ENCODE measurements at regions of chr7 and their contacts with region 1.

Region 1: DNA sequence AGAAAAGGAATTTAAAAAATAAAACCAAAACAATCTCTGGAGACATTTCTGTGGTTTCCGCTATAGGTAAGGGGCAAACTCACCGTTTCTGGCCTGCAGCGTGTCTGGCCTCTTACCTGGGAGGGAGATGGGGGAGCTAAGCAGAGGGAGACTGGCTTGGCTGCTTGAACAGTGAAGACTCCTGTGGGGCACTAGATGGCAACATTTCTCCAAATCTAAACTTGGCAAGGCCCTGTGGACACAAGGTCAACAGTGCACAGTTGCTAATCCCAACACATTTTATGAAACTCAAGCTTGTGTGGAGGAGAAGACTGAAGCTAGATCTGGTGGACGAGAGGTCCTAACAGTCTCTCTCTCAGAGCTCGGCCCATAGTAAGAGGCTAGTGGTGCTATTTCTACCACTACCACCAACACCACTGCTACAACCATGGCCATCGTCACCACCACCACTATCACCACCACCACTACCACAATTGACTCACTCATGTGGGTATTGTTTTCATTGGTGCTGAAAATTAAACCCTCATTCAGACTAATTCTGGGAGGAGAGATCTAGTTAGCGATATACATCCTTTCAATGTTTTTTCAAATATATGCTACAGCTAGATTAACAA is 28.4 kb upstream of the CDHR3 start:
- DNase-seq: peak; percentile 20
- H3K4me3 Mint-ChIP-seq: no peak overlapping the region
- H3K27ac Mint-ChIP-seq: no peak overlapping the region
- H3K4me1 Mint-ChIP-seq: peaks cover 8% of the 10 kb centered on the region
- H3K27me3 Mint-ChIP-seq: peaks cover 4% of the 10 kb centered on the region
- CTCF ChIP-seq: no peak

Region 2: DNA sequence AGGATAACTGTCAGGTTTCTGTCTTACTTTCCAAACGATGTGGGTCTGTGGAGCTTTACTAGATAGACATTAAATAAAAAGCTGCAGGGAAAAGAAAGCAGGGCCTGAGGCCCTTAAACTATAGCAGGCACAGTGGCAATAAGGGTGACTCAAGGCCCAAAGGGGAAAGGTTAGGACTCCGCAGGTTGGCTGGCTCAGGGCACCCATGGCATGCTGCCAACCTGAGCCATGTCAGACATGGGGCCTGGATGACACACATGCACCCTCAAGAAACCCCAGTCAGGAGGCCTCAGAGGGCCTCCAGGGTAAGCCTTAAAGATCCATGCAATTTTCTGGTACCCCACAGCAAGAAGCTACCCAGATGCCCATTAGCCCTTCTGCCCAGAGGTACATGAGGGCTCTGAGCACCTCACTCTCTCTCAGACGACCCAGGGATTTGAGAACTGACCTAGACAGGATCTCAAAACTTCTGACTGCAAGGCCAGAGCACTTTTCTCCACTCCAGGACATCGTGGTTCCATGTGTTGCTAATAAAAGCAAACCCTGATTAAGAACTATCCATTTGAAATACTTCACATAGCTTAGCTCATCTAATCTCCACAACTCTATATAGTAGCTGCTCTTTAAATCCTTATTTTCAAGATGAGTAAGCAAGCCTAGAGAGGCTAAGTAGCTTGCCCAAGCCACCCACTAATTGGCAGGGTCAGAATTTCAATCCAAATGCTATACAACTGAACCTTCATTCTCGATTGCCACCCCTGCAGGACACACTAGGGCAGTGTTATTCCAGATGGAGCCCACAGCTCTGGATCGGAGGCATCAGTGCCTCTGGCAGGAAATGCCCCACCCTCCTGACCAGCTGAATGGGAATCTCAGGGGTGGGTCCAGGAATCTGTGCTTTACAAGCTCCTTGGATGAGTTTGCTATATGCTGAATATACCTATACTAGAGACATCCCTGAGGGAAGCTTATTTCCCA is 220.9 kb before region 1 on chr7:
- CTCF ChIA-PET with region 1: no interaction called
- intact Hi-C with region 1: no loop called
- DNase-seq: no peak
- H3K4me3 Mint-ChIP-seq: no peak overlapping the region
- H3K27ac Mint-ChIP-seq: no peak overlapping the region
- H3K4me1 Mint-ChIP-seq: peaks cover 12% of the 10 kb centered on the region
- H3K27me3 Mint-ChIP-seq: no peaks in the 10 kb centered on the region
- CTCF ChIP-seq: no peak

Region 3: GRCh38 chr7:106009403-106010226 is 74.9 kb after region 1 on chr7:
- CTCF ChIA-PET with region 1: interaction called, 7 read pairs
- intact Hi-C with region 1: loop called (anchors 2 kb)
- DNase-seq: peak; percentile 86
- H3K4me3 Mint-ChIP-seq: peak overlapping the region; percentile 36
- H3K27ac Mint-ChIP-seq: no peak overlapping the region
- H3K4me1 Mint-ChIP-seq: no peaks in the 10 kb centered on the region
- H3K27me3 Mint-ChIP-seq: peaks cover 67% of the 10 kb centered on the region
- CTCF ChIP-seq: peak; percentile 95

Region 4: DNA sequence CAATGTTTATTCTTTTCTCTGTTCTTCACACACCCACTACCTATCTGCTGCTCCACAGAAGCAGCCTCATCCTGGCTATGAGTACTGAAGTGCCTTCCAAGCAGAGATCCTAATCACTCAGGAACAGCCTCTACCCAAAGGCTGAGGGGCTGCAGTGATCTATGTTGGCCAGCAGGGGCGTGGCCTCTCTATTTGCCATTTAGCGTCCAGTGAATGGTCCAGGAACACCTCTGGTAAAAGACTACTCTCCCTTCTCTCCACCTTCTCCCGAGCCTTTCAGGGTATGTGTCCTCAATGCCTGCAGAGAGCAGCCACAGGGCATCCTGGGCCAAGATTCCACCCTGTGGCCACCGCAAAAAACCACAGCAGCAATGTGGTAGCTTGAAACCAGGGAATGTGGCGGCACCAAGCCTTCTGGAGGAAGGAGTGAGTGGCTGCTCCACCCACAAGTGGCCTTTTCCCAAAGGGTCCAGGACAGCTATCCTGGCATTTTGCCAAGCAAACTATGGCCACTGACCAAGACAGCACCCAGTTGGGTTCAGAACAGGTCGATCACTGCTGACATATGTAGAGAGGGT is 106.5 kb after region 1 on chr7:
- CTCF ChIA-PET with region 1: interaction called, 5 read pairs
- intact Hi-C with region 1: loop called (anchors 2 kb)
- DNase-seq: peak; percentile 61
- H3K4me3 Mint-ChIP-seq: no peak overlapping the region
- H3K27ac Mint-ChIP-seq: no peak overlapping the region
- H3K4me1 Mint-ChIP-seq: peaks cover 9% of the 10 kb centered on the region
- H3K27me3 Mint-ChIP-seq: peaks cover 36% of the 10 kb centered on the region
- CTCF ChIP-seq: peak; percentile 76

Region 5: DNA sequence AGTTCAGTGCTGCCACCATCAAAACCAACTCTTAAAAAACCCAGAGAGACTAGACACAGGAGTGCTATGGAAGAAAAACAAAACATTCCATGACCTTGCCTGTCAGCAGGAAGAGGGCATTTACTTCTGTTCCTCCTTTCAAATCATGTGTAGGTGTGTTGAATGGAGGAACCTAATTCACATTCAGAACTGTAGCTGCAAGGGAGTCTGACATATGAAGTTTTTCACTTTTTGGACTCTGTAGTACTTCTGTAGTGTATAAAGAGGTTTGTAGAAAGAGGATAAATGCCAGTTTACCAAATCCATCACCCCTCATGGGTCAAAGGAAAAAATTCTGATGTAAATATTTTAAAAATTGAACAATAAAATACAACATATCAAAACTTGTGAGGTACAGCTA is 228.6 kb after region 1 on chr7:
- CTCF ChIA-PET with region 1: no interaction called
- intact Hi-C with region 1: loop called (anchors 5 kb)
- DNase-seq: no peak
- H3K4me3 Mint-ChIP-seq: no peak overlapping the region
- H3K27ac Mint-ChIP-seq: no peak overlapping the region
- H3K4me1 Mint-ChIP-seq: no peaks in the 10 kb centered on the region
- H3K27me3 Mint-ChIP-seq: peaks cover 9% of the 10 kb centered on the region
- CTCF ChIP-seq: no peak